ENCODE measurements at regions of chr10 and their contacts with region 1.

Region 1: GRCh38 chr10:13440185-13441061 is 88.4 kb downstream of the BEND7 start:
- DNase-seq: peak; percentile 87
- H3K4me3 ChIP-seq: peak overlapping the region; percentile 49 to 61
- H3K27ac ChIP-seq: no peak overlapping the region
- H3K4me1 ChIP-seq: peaks cover 7 to 11% of the 10 kb centered on the region in 2 experiments; a peak in 3 of 4 replicates
- H3K27me3 ChIP-seq: no peaks in the 10 kb centered on the region; the same call in 1 of the 2 replicates
- CTCF ChIP-seq: peak; percentile 93
- EP300 ChIP-seq: no peak
- RAD21 ChIP-seq: peak; percentile 58

Region 2: DNA sequence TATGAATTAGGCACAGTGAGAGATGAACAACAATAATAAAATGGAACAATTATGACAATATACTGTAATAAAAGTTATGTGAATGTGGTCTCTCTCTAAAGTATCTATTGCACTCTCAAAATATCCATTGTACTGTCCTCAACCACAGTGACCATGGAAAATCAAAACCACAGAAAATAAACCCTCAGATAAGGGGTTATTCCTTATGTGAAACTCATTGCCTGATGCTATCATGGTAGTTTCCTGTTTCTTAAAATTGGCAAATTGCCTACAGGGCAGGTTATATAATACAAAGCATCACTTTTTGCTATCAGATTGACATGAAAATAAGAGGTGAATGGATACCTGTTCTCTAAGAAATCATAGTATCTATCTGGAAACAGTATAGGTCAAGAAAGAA is 275.2 kb before region 1 on chr10:
- CTCF ChIA-PET with region 1: no interaction called
- POLR2A ChIA-PET with region 1: no interaction called
- DNase-seq: no peak
- H3K4me3 ChIP-seq: no peak overlapping the region
- H3K27ac ChIP-seq: no peak overlapping the region
- H3K4me1 ChIP-seq: peaks cover 0 to 9% of the 10 kb centered on the region in 2 experiments; a peak in 2 of 4 replicates
- H3K27me3 ChIP-seq: no peaks in the 10 kb centered on the region
- CTCF ChIP-seq: no peak
- EP300 ChIP-seq: no peak
- RAD21 ChIP-seq: no peak

Region 3: GRCh38 chr10:13414894-13415293 is 25.5 kb before region 1 on chr10:
- CTCF ChIA-PET with region 1: interaction called, 26 read pairs
- POLR2A ChIA-PET with region 1: no interaction called
- DNase-seq: peak; percentile 36
- H3K4me3 ChIP-seq: no peak overlapping the region
- H3K27ac ChIP-seq: no peak overlapping the region
- H3K4me1 ChIP-seq: no peaks in the 10 kb centered on the region
- H3K27me3 ChIP-seq: no peaks in the 10 kb centered on the region
- CTCF ChIP-seq: peak; percentile 33; the same call in 1 of the 2 replicates
- EP300 ChIP-seq: no peak
- RAD21 ChIP-seq: peak; percentile 35

Region 4: DNA sequence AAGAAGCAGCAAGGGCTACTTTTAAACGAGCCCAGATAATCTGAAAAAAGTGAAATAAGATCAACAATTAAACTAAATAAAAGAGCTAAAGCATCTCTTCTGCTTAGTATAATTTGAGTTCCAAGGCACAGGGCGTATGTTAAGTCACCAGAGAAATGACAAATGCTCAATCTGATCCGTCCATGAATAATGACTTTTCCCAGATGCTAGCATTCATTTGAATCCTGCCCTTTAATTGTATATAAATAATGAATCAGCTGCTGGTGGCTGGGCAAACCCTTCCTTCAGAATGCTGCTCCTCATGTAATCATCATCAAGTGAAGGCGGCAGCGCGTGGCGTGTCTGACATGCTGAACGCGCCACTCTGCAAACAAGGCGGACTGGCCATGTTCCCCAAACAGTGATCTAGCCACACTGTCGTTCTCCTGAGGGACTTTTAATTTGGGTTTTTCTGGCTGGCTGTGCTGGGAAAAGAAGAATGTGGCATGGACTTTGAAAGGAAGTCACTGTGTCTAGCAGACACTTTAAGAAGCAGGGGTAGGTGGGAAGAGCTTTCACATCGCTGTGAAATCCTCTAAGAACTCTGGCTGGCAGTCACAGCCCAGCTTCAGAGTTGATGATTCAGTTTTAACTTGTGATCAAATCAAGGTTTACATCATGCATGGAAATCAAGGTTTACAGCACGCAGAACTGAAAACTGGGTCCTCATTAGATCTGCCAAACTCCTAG is 17.7 kb after region 1 on chr10:
- CTCF ChIA-PET with region 1: interaction called, 23 read pairs
- POLR2A ChIA-PET with region 1: no interaction called
- DNase-seq: no peak
- H3K4me3 ChIP-seq: no peak overlapping the region
- H3K27ac ChIP-seq: no peak overlapping the region
- H3K4me1 ChIP-seq: no peaks in the 10 kb centered on the region
- H3K27me3 ChIP-seq: no peaks in the 10 kb centered on the region
- CTCF ChIP-seq: no peak
- EP300 ChIP-seq: no peak
- RAD21 ChIP-seq: no peak

Region 5: DNA sequence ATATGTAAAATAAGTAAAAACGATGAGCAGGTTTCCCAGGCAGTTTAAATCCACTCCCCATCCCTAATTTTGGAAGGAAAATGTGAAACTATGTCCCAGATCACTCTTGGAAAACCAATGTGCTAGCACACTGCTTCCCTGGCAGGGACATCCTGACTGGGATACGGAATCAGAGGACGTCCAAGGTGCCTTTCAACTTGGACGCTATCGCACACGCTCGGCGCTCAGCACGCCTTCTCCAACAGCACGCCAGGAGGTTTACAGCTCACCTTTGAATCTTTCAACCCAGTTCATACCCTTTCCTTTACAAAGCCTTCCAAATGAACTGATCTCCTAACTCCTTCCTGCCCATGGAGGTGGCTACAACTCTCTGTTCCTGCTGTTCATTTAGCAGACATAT is 41.3 kb after region 1 on chr10:
- CTCF ChIA-PET with region 1: interaction called, 11 read pairs
- POLR2A ChIA-PET with region 1: no interaction called
- DNase-seq: no peak
- H3K4me3 ChIP-seq: no peak overlapping the region
- H3K27ac ChIP-seq: no peak overlapping the region
- H3K4me1 ChIP-seq: no peaks in the 10 kb centered on the region; a peak in 1 of 4 replicates
- H3K27me3 ChIP-seq: no peaks in the 10 kb centered on the region
- CTCF ChIP-seq: no peak
- EP300 ChIP-seq: no peak
- RAD21 ChIP-seq: no peak

Region 6: GRCh38 chr10:14556285-14556956 is 1116.0 kb after region 1 on chr10:
- CTCF ChIA-PET with region 1: no interaction called
- POLR2A ChIA-PET with region 1: no interaction called
- DNase-seq: no peak
- H3K4me3 ChIP-seq: no peak overlapping the region
- H3K27ac ChIP-seq: no peak overlapping the region
- H3K4me1 ChIP-seq: no peaks in the 10 kb centered on the region; a peak in 1 of 4 replicates
- H3K27me3 ChIP-seq: no peaks in the 10 kb centered on the region
- CTCF ChIP-seq: no peak
- EP300 ChIP-seq: no peak
- RAD21 ChIP-seq: no peak